ENCODE measurements at regions of chr6 and their contacts with region 1.

Region 1: DNA sequence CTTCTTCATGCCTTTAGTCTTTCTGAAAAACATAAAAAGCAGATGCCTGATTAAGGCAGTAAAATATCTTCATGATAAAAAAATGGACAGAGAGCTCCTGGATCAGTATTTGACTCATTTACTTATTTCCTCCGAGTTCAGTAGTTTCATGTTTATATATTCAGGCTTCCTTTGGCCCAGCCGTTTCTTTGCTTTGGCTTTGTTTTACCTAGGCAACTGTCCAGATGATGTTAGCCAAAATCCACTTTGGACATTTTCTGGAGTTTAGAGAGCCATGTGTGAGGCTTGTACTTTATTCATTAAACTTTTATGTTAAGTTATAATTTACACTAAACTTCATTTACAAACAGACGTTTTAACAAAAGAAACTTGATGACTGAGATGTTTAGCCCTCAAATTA is 307.1 kb upstream of the RSPO3 start:
- DNase-seq: no peak
- H3K4me3 ChIP-seq: no peak overlapping the region
- H3K27ac ChIP-seq: no peak overlapping the region
- H3K4me1 ChIP-seq: peaks cover 0 to 3% (median 0%) of the 10 kb centered on the region in 4 donors
- H3K27me3 ChIP-seq: no peaks in the 10 kb centered on the region
- CTCF ChIP-seq: no peak
- EP300 ChIP-seq: no peak
- POLR2A ChIP-seq: no peak

Region 2: GRCh38 chr6:126574301-126574700 is 237.0 kb before region 1 on chr6:
- in situ Hi-C with region 1: no loop called
- intact Hi-C with region 1: no loop called
- DNase-seq: no peak
- H3K4me3 ChIP-seq: no peak overlapping the region
- H3K27ac ChIP-seq: no peak overlapping the region
- H3K4me1 ChIP-seq: no peaks in the 10 kb centered on the region
- H3K27me3 ChIP-seq: no peaks in the 10 kb centered on the region
- CTCF ChIP-seq: no peak
- EP300 ChIP-seq: no peak
- POLR2A ChIP-seq: no peak

Region 3: DNA sequence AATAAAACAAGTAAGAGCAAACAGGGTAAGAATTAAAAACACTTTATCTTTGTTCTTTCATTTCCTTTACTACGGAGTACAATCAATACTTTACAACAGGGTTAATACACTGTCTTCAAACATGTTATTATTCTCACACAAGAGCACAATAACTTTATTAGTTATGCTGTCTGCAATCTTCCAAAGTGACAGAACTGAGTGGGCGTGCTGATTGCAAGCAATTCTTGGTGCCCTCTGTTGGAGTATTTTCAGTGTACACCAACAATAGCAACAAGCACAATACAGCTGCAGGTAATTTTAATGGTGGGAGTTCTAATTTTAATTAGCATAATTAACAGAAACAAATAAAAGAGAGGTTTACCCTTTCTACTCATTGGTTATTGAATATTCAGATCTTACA is 1743.0 kb after region 1 on chr6:
- in situ Hi-C with region 1: no loop called
- intact Hi-C with region 1: loop called (anchors 10 kb)
- DNase-seq: no peak
- H3K4me3 ChIP-seq: no peak overlapping the region
- H3K27ac ChIP-seq: no peak overlapping the region
- H3K4me1 ChIP-seq: no peaks in the 10 kb centered on the region
- H3K27me3 ChIP-seq: no peaks in the 10 kb centered on the region
- CTCF ChIP-seq: peak in 1 of 5 experiments; percentile 23
- EP300 ChIP-seq: no peak
- POLR2A ChIP-seq: no peak